ENCODE measurements at regions of chr11 and their contacts with region 1.

Region 1: GRCh38 chr11:99325807-99326206 is 305.1 kb downstream of the CNTN5 start:
- DNase-seq: peak; percentile 73
- H3K27ac ChIP-seq: no peak overlapping the region
- CTCF ChIP-seq: no peak

Region 2: DNA sequence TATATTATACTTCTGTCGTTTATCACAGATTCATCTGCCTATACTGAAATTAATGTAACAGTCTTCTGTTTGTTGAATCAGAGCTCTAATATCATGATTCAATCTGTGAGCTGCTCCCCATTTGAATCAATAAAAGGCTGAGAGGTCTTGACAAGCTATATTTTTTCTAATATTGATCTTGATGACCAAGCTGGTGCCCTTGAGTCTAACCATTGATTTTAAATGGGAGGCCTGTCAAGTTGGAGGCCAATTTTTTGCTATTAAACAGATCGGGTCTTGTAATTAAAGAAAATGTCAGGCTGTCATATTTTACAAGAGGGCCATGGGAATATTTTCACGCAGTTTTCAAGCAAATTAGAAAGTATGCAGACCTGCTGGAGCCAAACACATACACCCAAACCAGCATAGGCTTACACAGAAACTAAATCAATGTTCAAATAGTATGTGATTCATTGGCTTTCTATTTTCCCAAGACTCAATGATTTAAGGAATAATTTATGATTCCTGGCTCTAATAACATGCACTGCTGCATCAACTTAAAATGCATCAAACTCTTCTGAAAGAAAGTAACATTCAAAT is 18.2 kb before region 1 on chr11:
- CTCF ChIA-PET with region 1: no interaction called
- POLR2A ChIA-PET with region 1: no interaction called
- DNase-seq: no peak
- H3K27ac ChIP-seq: no peak overlapping the region
- CTCF ChIP-seq: no peak

Region 3: DNA sequence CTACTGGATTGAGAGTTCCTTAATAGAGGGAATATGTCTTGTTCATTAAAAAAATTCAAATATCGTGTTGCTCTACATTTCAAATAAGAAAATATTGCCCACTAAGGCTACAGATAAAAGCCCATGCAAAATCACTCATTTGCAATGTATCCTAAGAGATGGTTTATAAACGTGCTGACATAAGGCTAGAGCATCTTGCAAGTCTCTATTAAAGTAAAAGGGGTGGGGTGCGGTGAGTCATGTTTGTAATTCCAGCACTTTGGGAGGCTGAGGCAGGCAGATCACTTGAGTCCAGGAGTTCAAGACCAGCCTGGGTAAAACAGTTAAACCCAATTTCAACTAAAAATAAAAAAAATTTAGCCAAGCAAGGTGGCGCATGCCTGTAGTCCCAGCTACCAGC is 1733.5 kb after region 1 on chr11:
- CTCF ChIA-PET with region 1: interaction called, 12 read pairs
- POLR2A ChIA-PET with region 1: no interaction called
- DNase-seq: no peak
- H3K27ac ChIP-seq: no peak overlapping the region
- CTCF ChIP-seq: no peak

Measured in RWPE1 (cell line).